ENCODE measurements at regions of chr11 and their contacts with region 1.

Region 1: DNA sequence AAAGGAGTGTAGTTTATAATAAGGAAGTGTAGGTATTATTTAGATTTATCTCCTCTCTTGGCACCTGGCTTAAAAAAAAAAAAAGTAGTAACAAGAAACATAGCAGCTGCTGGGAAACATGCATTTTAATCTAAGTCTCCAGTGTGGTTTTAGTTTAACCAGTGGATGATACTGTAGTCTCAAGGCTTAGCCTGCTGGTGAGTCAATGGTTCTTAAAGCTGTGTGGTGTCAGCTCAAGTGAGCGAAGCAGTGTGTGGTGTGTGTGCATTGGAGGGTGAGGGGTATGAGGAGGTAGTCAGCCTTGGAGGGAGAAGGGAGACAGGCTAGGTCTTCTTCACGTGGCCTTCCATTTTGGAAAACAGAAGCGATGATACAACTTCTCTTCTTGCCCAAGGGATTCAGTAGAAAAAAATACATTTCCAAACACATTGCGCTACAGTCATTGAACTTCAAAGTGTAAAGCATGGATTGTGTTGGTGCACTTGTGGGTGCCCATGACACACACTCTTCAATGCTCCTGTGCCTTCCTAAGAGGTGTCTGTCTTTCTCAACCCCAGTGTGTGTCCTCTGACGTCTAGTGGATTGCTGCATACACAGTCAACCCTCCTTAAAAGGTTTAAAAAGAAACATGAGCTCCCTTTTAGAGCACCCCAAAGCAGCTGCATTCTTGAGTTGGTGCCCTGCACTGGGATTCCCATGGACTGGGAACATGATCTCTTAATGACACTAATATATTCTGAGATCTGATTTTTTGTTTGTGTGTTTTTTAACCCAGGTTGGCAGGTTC is 40.1 kb downstream of the ZBTB16 start:
- DNase-seq: no peak
- ATAC-seq: peak; percentile 43
- H3K4me3 ChIP-seq: no peak overlapping the region
- H3K4me3 Mint-ChIP-seq: no peak overlapping the region
- H3K27ac ChIP-seq: no peak overlapping the region
- H3K27ac Mint-ChIP-seq: peak overlapping the region in 4 of 9 donors; percentile 2 to 76 (median 54)
- H3K4me1 ChIP-seq: peaks cover 13 to 21% of the 10 kb centered on the region in 2 donors
- H3K4me1 Mint-ChIP-seq: peaks cover 19 to 75% (median 47%) of the 10 kb centered on the region in 7 donors
- H3K27me3 ChIP-seq: no peaks in the 10 kb centered on the region
- H3K27me3 Mint-ChIP-seq: peaks cover 0 to 28% (median 0%) of the 10 kb centered on the region in 5 donors

Region 2: DNA sequence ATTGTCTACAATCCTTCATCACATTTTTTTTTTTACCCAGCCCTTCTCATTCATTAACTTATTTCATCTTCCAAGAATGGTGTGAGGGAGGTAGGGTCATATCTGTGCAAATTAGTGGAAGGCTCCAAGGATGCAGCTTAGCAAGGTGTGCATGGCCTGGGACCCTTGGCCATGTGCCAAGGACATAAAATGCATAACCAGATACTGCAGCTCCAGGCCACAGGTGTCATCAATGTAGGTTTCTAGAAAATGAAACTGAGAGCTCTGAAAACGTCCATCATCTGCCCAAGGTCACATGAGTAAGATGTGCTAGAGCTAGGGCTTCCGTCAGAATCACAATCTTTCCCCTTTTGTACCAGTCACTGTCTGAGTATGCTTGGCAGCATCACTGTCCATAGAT is 682.2 kb before region 1 on chr11:
- CTCF ChIA-PET with region 1: no interaction called
- POLR2A ChIA-PET with region 1: no interaction called
- intact Hi-C with region 1: no loop called
- DNase-seq: no peak
- ATAC-seq: no peak
- H3K4me3 ChIP-seq: no peak overlapping the region
- H3K4me3 Mint-ChIP-seq: no peak overlapping the region
- H3K27ac ChIP-seq: no peak overlapping the region
- H3K27ac Mint-ChIP-seq: no peak overlapping the region
- H3K4me1 ChIP-seq: no peaks in the 10 kb centered on the region
- H3K4me1 Mint-ChIP-seq: no peaks in the 10 kb centered on the region
- H3K27me3 ChIP-seq: no peaks in the 10 kb centered on the region
- H3K27me3 Mint-ChIP-seq: peaks cover 0 to 15% (median 0%) of the 10 kb centered on the region in 5 donors

Region 3: DNA sequence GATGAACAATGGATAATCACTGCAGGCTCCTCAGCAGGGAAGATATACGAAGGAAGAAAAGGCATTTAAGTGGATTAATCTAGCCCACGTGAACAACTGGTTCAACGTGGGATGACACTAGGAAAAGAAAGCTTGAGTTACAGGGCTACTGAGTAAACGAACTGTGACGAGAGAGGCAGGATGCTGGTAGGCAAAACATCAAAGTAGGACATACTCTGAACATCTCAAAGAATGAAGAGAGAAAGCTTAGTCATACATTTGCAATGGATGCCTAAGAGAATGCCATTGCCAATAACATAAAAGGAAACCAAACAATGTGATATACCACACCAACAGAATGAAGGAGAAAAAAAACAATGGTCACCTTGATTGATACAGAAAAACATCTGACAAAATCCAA is 237.2 kb before region 1 on chr11:
- CTCF ChIA-PET with region 1: no interaction called
- POLR2A ChIA-PET with region 1: no interaction called
- intact Hi-C with region 1: no loop called
- DNase-seq: no peak
- ATAC-seq: no peak
- H3K4me3 ChIP-seq: no peak overlapping the region
- H3K4me3 Mint-ChIP-seq: peak overlapping the region in 2 of 10 donors; percentile 0 to 27
- H3K27ac ChIP-seq: no peak overlapping the region
- H3K27ac Mint-ChIP-seq: peak overlapping the region in 3 of 9 donors; percentile 2 to 74 (median 7)
- H3K4me1 ChIP-seq: peaks cover 0 to 25% of the 10 kb centered on the region in 2 donors
- H3K4me1 Mint-ChIP-seq: peaks cover 11 to 49% (median 22%) of the 10 kb centered on the region in 7 donors
- H3K27me3 ChIP-seq: no peaks in the 10 kb centered on the region
- H3K27me3 Mint-ChIP-seq: no peaks in the 10 kb centered on the region

Region 4: GRCh38 chr11:114075891-114076441 is 23.6 kb before region 1 on chr11:
- CTCF ChIA-PET with region 1: no interaction called
- POLR2A ChIA-PET with region 1: no interaction called
- intact Hi-C with region 1: loop called (anchors 2 kb)
- DNase-seq: peak in 6 of 9 donors; percentile 32 to 48 (median 36)
- ATAC-seq: peak; percentile 40
- H3K4me3 ChIP-seq: no peak overlapping the region
- H3K4me3 Mint-ChIP-seq: peak overlapping the region in 7 of 10 donors; percentile 20 to 57 (median 43)
- H3K27ac ChIP-seq: no peak overlapping the region
- H3K27ac Mint-ChIP-seq: peak overlapping the region in 3 of 9 donors; percentile 5 to 24 (median 20)
- H3K4me1 ChIP-seq: peaks cover 32 to 68% of the 10 kb centered on the region in 2 donors
- H3K4me1 Mint-ChIP-seq: peaks cover 29 to 79% (median 59%) of the 10 kb centered on the region in 7 donors
- H3K27me3 ChIP-seq: no peaks in the 10 kb centered on the region
- H3K27me3 Mint-ChIP-seq: peaks cover 0 to 44% (median 0%) of the 10 kb centered on the region in 5 donors

Region 5: DNA sequence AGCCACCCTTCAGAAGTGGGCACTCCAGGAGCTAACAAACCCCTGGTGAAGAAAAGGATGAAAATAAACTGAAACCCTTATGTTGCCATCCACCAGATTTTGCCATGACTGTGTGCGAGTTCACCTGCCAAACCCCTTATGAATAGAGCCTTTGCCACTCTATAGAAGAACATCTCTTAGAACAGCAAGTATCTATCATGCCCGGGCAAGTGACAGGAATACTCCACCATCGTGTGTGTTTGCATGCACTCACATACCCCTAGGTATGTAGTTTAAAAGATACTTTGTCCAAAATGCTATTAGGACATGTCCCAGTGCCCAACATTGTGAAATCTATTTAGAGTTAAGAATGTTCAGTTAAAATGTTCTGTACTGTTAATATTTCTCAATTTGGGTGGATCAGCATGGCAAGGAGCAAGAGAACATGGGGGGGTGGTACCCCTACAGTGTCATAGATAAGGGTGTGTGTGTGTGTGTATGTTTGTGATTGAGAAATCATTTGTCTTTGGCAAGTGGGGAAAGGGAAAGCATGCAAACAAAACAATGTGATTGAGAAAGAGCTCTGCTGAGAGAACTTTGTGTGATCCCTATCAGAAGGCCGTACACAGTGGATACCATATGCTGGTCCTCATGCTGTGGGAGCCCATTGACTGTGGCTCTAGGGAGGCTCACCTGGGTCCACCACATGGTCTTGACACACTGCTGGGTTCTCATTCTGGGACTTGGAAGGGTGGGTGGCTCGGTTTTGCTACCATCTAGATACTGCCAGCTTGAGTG is 54.9 kb after region 1 on chr11:
- CTCF ChIA-PET with region 1: no interaction called
- POLR2A ChIA-PET with region 1: no interaction called
- intact Hi-C with region 1: no loop called
- DNase-seq: no peak
- ATAC-seq: peak; percentile 75
- H3K4me3 ChIP-seq: no peak overlapping the region
- H3K4me3 Mint-ChIP-seq: no peak overlapping the region
- H3K27ac ChIP-seq: no peak overlapping the region
- H3K27ac Mint-ChIP-seq: peak overlapping the region in 3 of 9 donors; percentile 4 to 54 (median 38)
- H3K4me1 ChIP-seq: peaks cover 5 to 29% of the 10 kb centered on the region in 2 donors
- H3K4me1 Mint-ChIP-seq: peaks cover 29 to 82% (median 58%) of the 10 kb centered on the region in 7 donors
- H3K27me3 ChIP-seq: no peaks in the 10 kb centered on the region
- H3K27me3 Mint-ChIP-seq: peaks cover 0 to 8% (median 0%) of the 10 kb centered on the region in 5 donors